BJ (cell line): ENCODE measurements at regions of chr5 and their contacts with region 1.

Region 1: DNA sequence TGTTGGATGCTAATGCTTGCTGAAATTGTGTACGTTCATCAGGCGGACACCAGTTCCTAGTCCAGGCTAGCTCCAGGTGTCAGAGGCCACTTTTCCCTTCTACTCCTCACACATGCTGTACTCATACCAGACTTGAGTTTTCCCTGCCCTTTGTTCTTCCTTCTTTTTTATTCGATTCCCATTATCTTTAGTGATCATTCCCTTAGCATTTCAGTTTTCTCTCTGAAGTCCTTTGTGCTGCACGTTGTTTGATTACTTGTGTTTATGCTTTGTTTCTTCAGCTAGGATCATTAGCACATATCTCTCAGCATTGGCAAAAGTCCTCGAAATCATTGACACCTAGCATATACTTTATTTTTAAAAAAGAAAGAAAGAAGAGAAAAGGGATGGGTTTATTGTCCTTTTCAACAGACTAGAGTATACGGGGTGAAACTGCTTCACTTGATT is 409 bp upstream of the COX7C start:
- DNase-seq: no peak
- H3K4me3 ChIP-seq: no peak overlapping the region
- H3K27me3 ChIP-seq: peaks cover 1% of the 10 kb centered on the region; the same call in 1 of the 2 replicates
- CTCF ChIP-seq: no peak

Region 2: DNA sequence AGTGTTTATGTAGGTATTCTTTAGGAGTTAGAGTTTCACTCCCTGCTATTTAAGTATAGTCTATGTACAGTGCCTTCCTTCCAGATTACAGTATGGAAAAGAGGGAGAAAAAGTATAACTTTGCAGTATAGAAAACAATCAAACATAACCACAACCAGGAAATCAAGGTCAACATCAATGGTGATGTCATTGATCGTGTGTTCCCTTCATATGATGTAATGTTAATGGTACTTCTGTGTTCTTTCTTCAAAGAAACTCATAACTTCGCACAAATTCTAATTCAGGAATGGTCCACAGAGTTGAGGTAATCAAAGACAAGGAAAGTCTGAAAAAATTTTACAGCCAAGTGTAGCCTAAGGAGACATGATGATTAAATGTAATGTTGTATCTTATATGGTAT is 1271.5 kb before region 1 on chr5:
- CTCF ChIA-PET with region 1: no interaction called
- POLR2A ChIA-PET with region 1: no interaction called
- DNase-seq: no peak
- H3K4me3 ChIP-seq: no peak overlapping the region
- H3K27me3 ChIP-seq: no peaks in the 10 kb centered on the region
- CTCF ChIP-seq: no peak

Region 3: GRCh38 chr5:85910335-85910734 is 707.0 kb before region 1 on chr5:
- CTCF ChIA-PET with region 1: no interaction called
- POLR2A ChIA-PET with region 1: interaction called, 10 read pairs
- DNase-seq: no peak
- H3K4me3 ChIP-seq: no peak overlapping the region
- H3K27me3 ChIP-seq: no peaks in the 10 kb centered on the region
- CTCF ChIP-seq: no peak

Region 4: DNA sequence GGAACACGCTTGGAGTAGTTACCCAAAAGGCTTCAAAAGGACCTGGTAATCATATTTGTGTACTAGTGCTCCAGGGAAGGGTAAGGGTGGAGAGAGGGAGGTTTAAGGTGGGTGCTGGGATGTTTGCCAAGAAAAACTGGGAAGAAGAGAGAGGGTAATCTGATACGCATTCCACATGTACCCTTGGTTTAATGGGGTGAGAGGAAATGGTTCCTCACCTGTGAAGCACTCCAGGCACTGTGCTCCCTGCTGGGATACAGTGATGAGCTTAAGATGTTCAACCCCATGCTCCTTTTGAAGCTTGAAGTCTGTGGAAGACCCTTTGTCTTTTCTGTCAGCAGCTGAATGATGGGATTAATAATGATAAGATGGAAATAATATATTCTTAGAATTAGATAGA is 98.8 kb after region 1 on chr5:
- CTCF ChIA-PET with region 1: no interaction called
- POLR2A ChIA-PET with region 1: no interaction called
- DNase-seq: no peak
- H3K4me3 ChIP-seq: no peak overlapping the region
- H3K27me3 ChIP-seq: no peaks in the 10 kb centered on the region
- CTCF ChIP-seq: no peak

Region 5: GRCh38 chr5:86748538-86749105 is 131.3 kb after region 1 on chr5:
- CTCF ChIA-PET with region 1: no interaction called
- POLR2A ChIA-PET with region 1: no interaction called
- DNase-seq: no peak
- H3K4me3 ChIP-seq: no peak overlapping the region
- H3K27me3 ChIP-seq: no peaks in the 10 kb centered on the region
- CTCF ChIP-seq: no peak